CD8-positive, alpha-beta T cell (primary cell): ENCODE measurements at regions of chr3 and their contacts with region 1.

Region 1: GRCh38 chr3:172476347-172476746 is 28.1 kb upstream of the GHSR start:
- DNase-seq: no peak
- ATAC-seq: no peak
- H3K4me3 ChIP-seq: no peak overlapping the region
- H3K4me3 Mint-ChIP-seq: peak overlapping the region; percentile 62
- H3K27ac ChIP-seq: no peak overlapping the region
- H3K27ac Mint-ChIP-seq: no peak overlapping the region
- H3K4me1 ChIP-seq: no peaks in the 10 kb centered on the region
- H3K4me1 Mint-ChIP-seq: peaks cover 9% of the 10 kb centered on the region
- H3K27me3 ChIP-seq: no peaks in the 10 kb centered on the region
- H3K27me3 Mint-ChIP-seq: no peaks in the 10 kb centered on the region
- CTCF ChIP-seq: no peak

Region 2: GRCh38 chr3:170961616-170962400 is 1514.5 kb before region 1 on chr3:
- CTCF ChIA-PET with region 1: interaction called, 3 read pairs
- POLR2A ChIA-PET with region 1: no interaction called
- intact Hi-C with region 1: loop called in 1 of 2 experiments (anchors 5 kb)
- DNase-seq: peak in 2 of 9 experiments; percentile 18 to 40
- ATAC-seq: no peak
- H3K4me3 ChIP-seq: no peak overlapping the region
- H3K4me3 Mint-ChIP-seq: no peak overlapping the region
- H3K27ac ChIP-seq: no peak overlapping the region
- H3K27ac Mint-ChIP-seq: no peak overlapping the region
- H3K4me1 ChIP-seq: no peaks in the 10 kb centered on the region
- H3K4me1 Mint-ChIP-seq: no peaks in the 10 kb centered on the region
- H3K27me3 ChIP-seq: peaks cover 0 to 2% of the 10 kb centered on the region in 2 experiments
- H3K27me3 Mint-ChIP-seq: no peaks in the 10 kb centered on the region
- CTCF ChIP-seq: peak; percentile 72

Region 3: DNA sequence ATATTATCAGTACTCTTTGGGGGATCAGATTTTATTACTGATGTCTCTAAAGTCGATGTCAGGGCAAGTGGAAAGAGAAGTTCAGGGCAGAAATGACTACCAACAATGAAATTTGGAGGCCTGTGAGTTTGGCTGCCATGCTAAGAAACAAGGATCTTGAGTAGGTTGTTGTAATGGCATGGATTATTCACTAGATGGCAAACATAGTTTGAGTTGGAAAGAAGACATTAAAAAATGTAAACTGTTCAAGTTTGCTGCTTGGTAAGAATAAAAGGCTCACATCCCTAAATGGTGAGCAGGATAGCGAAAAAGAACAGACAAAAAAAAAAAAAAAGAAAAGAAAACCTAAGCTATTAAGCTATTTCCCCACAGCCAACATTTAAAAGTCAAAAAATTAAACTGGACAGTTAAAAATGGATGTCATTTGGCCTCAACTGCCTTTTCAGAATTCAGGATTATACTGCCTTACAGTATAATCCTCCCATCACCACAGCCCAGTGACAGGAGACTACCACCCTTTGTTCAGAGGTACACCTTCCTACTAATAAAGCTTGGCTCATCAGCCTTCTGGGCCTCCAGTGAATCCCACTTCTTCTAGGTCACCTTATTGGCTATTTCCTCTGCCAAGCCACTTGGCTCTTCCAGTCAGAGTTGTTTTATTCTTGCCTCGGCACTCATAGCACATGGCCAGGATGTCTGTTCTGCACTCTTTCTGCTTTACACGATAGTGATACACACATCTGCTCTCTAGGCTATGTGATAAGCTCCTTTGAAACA is 829.8 kb before region 1 on chr3:
- CTCF ChIA-PET with region 1: no interaction called
- POLR2A ChIA-PET with region 1: no interaction called
- intact Hi-C with region 1: loop called in 1 of 2 experiments (anchors 10 kb)
- DNase-seq: peak in 2 of 9 experiments; percentile 29 to 42
- ATAC-seq: no peak
- H3K4me3 ChIP-seq: no peak overlapping the region
- H3K4me3 Mint-ChIP-seq: no peak overlapping the region
- H3K27ac ChIP-seq: no peak overlapping the region
- H3K27ac Mint-ChIP-seq: no peak overlapping the region
- H3K4me1 ChIP-seq: no peaks in the 10 kb centered on the region
- H3K4me1 Mint-ChIP-seq: no peaks in the 10 kb centered on the region
- H3K27me3 ChIP-seq: no peaks in the 10 kb centered on the region
- H3K27me3 Mint-ChIP-seq: no peaks in the 10 kb centered on the region
- CTCF ChIP-seq: peak; percentile 29

Region 4: GRCh38 chr3:172332256-172333041 is 143.9 kb before region 1 on chr3:
- CTCF ChIA-PET with region 1: interaction called, 3 read pairs
- POLR2A ChIA-PET with region 1: no interaction called
- intact Hi-C with region 1: loop called (anchors 1 to 2 kb)
- DNase-seq: peak; percentile 4 to 71 (median 53)
- ATAC-seq: peak; percentile 81
- H3K4me3 ChIP-seq: no peak overlapping the region
- H3K4me3 Mint-ChIP-seq: no peak overlapping the region
- H3K27ac ChIP-seq: no peak overlapping the region
- H3K27ac Mint-ChIP-seq: no peak overlapping the region
- H3K4me1 ChIP-seq: no peaks in the 10 kb centered on the region
- H3K4me1 Mint-ChIP-seq: peaks cover 2% of the 10 kb centered on the region
- H3K27me3 ChIP-seq: no peaks in the 10 kb centered on the region
- H3K27me3 Mint-ChIP-seq: no peaks in the 10 kb centered on the region
- CTCF ChIP-seq: peak; percentile 79

Region 5: GRCh38 chr3:172461530-172462138 is 14.7 kb before region 1 on chr3:
- CTCF ChIA-PET with region 1: interaction called, 7 read pairs
- POLR2A ChIA-PET with region 1: no interaction called
- intact Hi-C with region 1: loop called in 1 of 2 experiments (anchors 2 kb)
- DNase-seq: peak in 2 of 9 experiments; percentile 43 to 55
- ATAC-seq: peak; percentile 62
- H3K4me3 ChIP-seq: no peak overlapping the region
- H3K4me3 Mint-ChIP-seq: no peak overlapping the region
- H3K27ac ChIP-seq: no peak overlapping the region
- H3K27ac Mint-ChIP-seq: no peak overlapping the region
- H3K4me1 ChIP-seq: no peaks in the 10 kb centered on the region
- H3K4me1 Mint-ChIP-seq: no peaks in the 10 kb centered on the region
- H3K27me3 ChIP-seq: peaks cover 0 to 2% of the 10 kb centered on the region in 2 experiments
- H3K27me3 Mint-ChIP-seq: peaks cover 4% of the 10 kb centered on the region
- CTCF ChIP-seq: peak; percentile 93